H1 (cell line): ENCODE measurements at regions of chr5 and their contacts with region 1.

Region 1: GRCh38 chr5:173232499-173233346 is 2.3 kb downstream of the NKX2-5 start:
- DNase-seq: no peak
- H3K4me3 ChIP-seq: peak overlapping the region in 1 of 4 experiments; percentile 36; a peak in 2 of 8 replicates
- H3K27ac ChIP-seq: no peak overlapping the region
- H3K4me1 ChIP-seq: peaks cover under 1 to 53% (median 28%) of the 10 kb centered on the region in 4 experiments
- H3K27me3 ChIP-seq: peaks cover 95 to 100% (median 100%) of the 10 kb centered on the region in 4 experiments
- CTCF ChIP-seq: no peak
- EP300 ChIP-seq: no peak
- POLR2A ChIP-seq: no peak
- RAD21 ChIP-seq: no peak

Region 2: DNA sequence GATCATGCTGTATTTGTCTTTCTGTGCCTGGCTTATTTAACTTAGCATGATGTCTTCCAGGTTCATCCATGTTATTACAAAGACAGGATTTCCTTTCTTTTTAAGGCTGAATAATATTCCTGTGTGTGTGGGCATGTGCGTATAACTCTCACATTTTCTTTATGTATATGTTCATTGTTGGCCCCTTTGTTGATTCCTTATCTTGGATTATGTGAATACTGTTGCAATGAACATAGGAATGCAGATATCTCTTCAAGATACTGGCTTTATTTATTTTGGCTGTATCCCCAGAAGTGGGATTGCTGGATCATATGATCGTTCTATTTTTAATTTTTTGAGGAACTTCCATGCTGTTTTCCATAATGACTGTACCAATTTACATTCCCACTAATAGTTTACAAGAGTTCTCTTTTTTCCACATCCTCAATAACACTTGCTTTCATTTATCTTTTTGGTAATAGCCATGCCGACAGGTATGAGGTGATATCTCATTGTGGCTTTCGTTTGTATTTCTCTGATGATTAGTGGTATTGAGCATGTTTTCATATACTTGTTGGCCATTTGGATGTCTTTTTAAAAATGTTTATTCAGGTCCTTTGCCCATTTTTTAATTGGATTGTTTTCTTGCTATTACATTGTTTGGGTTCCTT is 138.6 kb before region 1 on chr5:
- CTCF ChIA-PET with region 1: no interaction called
- POLR2A ChIA-PET with region 1: no interaction called
- DNase-seq: no peak
- H3K4me3 ChIP-seq: no peak overlapping the region
- H3K27ac ChIP-seq: no peak overlapping the region
- H3K4me1 ChIP-seq: no peaks in the 10 kb centered on the region
- H3K27me3 ChIP-seq: no peaks in the 10 kb centered on the region
- CTCF ChIP-seq: no peak
- EP300 ChIP-seq: no peak
- POLR2A ChIP-seq: no peak
- RAD21 ChIP-seq: no peak

Region 3: GRCh38 chr5:173245319-173246134 is 12.8 kb after region 1 on chr5:
- CTCF ChIA-PET with region 1: interaction called, 5 read pairs
- POLR2A ChIA-PET with region 1: interaction called, 27 read pairs
- DNase-seq: no peak
- H3K4me3 ChIP-seq: peak overlapping the region; percentile 10 to 48 (median 22); a peak in 5 of 8 replicates
- H3K27ac ChIP-seq: no peak overlapping the region
- H3K4me1 ChIP-seq: peaks cover 0 to 38% (median 15%) of the 10 kb centered on the region in 4 experiments; a peak in 6 of 7 replicates
- H3K27me3 ChIP-seq: peaks cover 67 to 100% (median 88%) of the 10 kb centered on the region in 4 experiments
- CTCF ChIP-seq: no peak
- EP300 ChIP-seq: no peak
- POLR2A ChIP-seq: no peak
- RAD21 ChIP-seq: no peak

Region 4: GRCh38 chr5:173302547-173303066 is 69.9 kb after region 1 on chr5:
- CTCF ChIA-PET with region 1: no interaction called
- POLR2A ChIA-PET with region 1: no interaction called
- DNase-seq: no peak
- H3K4me3 ChIP-seq: no peak overlapping the region
- H3K27ac ChIP-seq: no peak overlapping the region
- H3K4me1 ChIP-seq: peaks cover 15 to 32% (median 23%) of the 10 kb centered on the region in 4 experiments
- H3K27me3 ChIP-seq: no peaks in the 10 kb centered on the region; a peak in 4 of 7 replicates
- CTCF ChIP-seq: no peak
- EP300 ChIP-seq: no peak
- POLR2A ChIP-seq: no peak
- RAD21 ChIP-seq: no peak